Endothelial cell of umbilical vein (primary cell): ENCODE measurements at regions of chr7 and their contacts with region 1.

Region 1: DNA sequence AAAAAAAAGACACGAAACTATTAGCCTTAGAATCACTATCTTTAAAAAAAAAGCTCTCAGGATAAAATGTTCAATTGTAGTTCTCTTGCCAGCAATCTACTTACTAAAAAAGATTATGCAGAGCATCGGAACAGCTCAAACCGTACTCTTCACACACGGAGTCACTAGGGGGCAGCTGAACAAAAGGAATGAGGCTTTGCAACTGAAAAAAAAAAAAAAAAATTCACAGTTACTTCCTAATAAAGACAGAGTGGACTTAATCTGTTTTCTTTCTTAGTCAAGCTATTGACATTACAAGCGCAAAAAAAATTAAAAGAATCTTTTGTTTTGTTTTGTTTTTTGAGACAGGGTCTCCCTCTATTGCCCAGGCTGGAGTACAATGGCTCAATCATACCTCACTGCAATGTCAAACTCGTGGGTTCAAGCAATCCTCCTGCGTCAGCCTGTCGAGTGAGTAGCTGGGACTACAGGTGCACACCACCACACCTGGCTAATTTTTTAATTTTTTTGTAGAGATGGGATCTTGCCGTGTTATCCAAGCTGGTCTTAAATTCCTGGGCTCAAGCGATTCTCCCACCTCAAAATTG is 11.5 kb downstream of the PMS2 start:
- DNase-seq: peak; percentile 74
- H3K4me3 ChIP-seq: no peak overlapping the region
- H3K27ac ChIP-seq: no peak overlapping the region
- H3K4me1 ChIP-seq: no peaks in the 10 kb centered on the region
- H3K27me3 ChIP-seq: no peaks in the 10 kb centered on the region
- CTCF ChIP-seq: peak; percentile 30 to 53
- POLR2A ChIP-seq: no peak

Region 2: DNA sequence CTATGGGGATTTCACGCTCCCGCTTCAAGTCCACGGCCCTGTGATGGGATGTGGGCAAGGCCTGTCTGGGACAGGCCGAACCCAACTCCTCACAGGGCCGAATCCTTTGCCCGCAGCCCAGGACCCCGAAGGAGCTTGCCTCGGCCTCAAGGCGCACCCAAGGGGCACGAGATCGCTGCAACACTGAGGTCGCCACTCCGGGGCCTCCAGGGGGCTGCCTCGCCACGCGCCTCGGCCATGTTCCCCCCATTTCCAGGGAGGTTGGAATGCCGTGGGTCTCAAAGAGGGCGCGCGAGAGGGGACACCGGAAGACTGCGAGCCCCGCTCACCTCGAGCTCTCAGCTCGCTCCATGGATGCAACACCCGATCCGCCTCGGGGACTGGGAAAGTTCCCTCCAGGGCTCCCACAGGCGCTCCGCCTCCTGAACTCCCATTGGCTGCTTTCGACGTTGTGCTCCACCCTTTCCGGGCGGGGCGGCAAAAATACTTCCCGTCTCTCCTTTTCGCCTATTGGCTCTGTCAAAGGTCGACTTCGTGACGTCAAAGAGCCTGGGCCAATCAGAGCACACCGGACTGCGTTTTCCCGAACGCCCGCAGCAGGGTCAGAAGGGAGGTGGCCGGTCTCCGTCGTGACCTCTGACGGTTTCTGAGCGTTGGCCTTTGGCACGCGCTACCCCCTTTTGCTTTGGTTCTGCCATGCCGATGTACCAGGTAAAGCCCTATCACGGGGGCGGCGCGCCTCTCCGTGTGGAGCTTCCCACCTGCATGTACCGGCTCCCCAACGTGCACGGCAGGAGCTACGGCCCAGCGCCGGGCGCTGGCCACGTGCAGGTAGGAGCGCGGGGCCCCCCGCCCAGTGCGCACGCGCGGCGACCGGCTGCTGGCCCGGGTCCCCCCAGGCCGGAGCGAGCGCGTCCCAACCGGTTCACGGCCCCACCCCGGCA is 11.6 kb after region 1 on chr7 and contains the starts of genes AIMP2 and PMS2:
- CTCF ChIA-PET with region 1: interaction called, 29 read pairs
- POLR2A ChIA-PET with region 1: interaction called, 3 read pairs
- dilution Hi-C with region 1: no loop called
- intact Hi-C with region 1: no loop called
- DNase-seq: peak; percentile 99
- H3K4me3 ChIP-seq: peak within 1 kb of the TSS; percentile 27 to 83 (median 71)
- H3K27ac ChIP-seq: peak within 1 kb of the TSS; percentile 56
- H3K4me1 ChIP-seq: peaks cover 5% of the 10 kb centered on the region
- H3K27me3 ChIP-seq: no peaks in the 10 kb centered on the region
- CTCF ChIP-seq: peak in 1 of 2 donors; percentile 26
- POLR2A ChIP-seq: peak; percentile 93
- total RNA-seq, gene AIMP2: 44.6 and 45.6 TPM in 2 replicates
- total RNA-seq, gene PMS2: 14.5 and 15.9 TPM in 2 replicates

Region 3: DNA sequence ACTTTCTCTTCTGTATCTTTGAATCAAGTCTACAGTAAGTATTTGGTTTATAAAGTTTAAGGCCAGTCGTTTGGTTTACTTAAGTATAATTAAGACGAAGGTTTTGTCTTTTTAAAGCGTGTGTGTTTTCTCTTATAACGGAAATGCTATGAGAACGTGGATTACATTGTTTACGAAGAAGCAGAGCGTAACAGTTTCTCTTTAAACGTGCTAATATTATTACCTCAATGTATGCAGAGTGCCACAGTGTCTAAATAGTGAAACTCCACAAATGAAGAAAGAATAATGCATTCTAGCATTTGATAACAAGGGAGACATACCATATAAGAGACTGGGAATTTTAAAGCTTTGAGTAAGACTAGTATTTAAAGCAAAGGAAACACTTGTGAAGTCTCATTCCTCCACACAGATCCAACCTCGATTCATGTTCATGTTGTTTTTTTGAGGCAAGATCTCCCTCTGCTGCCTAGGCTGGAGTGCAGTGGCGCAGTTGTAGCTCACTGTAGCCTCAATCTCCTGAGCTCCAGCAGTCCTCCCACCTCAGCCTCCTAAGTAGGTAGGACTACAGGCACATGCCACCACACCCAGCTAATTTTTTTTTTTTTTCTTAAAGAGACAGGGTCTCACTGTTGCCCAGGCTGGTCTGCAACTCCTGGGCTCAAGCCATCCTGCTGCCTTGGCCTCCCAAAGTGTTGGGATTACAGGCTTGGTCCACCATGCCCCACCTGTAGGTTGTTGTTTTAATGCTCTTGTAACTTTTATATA is 109.0 kb after region 1 on chr7:
- CTCF ChIA-PET with region 1: interaction called, 21 read pairs
- POLR2A ChIA-PET with region 1: no interaction called
- dilution Hi-C with region 1: no loop called
- intact Hi-C with region 1: loop called (anchors 1 kb)
- DNase-seq: peak; percentile 58
- H3K4me3 ChIP-seq: peak overlapping the region; percentile 71 to 90 (median 88)
- H3K27ac ChIP-seq: peak overlapping the region; percentile 13
- H3K4me1 ChIP-seq: peaks cover 7% of the 10 kb centered on the region
- H3K27me3 ChIP-seq: no peaks in the 10 kb centered on the region
- CTCF ChIP-seq: peak in 1 of 2 donors; percentile 4
- POLR2A ChIP-seq: no peak

Region 4: DNA sequence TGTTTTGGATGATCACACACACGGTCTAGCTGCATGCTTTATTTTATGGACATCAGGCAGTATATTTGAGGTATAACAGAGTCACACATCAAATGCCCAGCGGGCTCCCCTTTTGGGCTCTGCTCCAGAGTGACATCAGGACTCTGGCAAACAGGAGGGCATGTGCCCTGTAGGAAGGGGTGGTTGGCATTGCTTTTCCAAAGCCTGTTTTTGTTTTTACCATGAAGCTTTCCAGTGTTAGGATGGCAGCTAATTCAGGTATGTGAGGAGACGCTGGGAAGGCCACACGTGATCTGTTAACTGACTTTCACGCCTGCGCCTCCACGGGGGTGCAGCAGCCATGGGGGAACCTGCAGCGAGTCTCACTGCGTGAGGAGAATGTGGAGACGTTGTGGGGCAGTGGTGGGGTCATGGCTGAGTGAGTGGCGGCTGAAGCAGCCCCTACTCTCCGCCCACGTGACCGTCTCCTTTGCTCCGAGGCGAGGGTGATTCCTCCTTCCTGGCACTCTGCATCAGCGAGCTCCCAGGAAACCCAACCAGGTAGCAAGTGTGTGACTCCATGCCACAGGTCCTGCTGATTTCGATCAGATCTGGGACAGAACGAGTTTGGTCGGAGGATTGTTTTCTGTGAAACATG is 151.5 kb after region 1 on chr7:
- CTCF ChIA-PET with region 1: interaction called, 5 read pairs
- POLR2A ChIA-PET with region 1: no interaction called
- dilution Hi-C with region 1: no loop called
- intact Hi-C with region 1: loop called (anchors 10 kb)
- DNase-seq: no peak
- H3K4me3 ChIP-seq: no peak overlapping the region
- H3K27ac ChIP-seq: no peak overlapping the region
- H3K4me1 ChIP-seq: no peaks in the 10 kb centered on the region
- H3K27me3 ChIP-seq: no peaks in the 10 kb centered on the region
- CTCF ChIP-seq: no peak
- POLR2A ChIP-seq: no peak

Region 5: DNA sequence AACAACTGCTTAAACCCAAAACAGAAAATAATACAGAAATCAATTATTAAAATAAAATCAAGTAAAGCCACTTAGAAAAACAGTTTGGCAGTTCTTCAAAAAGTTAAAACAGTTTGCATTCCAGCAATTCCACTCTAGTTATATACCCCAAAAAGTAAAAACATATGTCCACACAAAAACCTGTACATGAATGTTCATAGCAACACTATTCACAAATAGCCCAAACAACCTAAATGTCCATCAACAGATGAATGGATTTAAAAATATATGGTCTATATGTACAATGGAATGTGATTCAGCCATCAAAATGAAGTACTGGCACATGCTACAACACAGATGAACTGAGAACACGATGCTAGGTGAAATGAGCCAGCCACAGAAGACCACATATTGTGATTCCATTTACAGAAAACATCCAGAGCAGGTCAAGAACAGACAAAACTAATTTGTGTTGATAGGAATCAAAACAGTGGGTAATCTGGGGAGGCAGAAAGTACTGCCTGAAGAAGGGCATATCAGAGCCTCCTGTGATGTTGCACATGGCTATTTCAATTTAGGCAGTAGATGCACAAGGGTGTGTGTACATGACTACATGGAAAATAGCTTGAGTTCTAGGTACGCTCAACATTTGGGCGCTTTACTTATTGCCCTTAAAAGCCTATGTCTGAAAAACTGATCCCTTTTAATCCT is 208.8 kb after region 1 on chr7:
- CTCF ChIA-PET with region 1: no interaction called
- POLR2A ChIA-PET with region 1: no interaction called
- dilution Hi-C with region 1: no loop called
- intact Hi-C with region 1: no loop called
- DNase-seq: no peak
- H3K4me3 ChIP-seq: no peak overlapping the region
- H3K27ac ChIP-seq: no peak overlapping the region
- H3K4me1 ChIP-seq: no peaks in the 10 kb centered on the region
- H3K27me3 ChIP-seq: no peaks in the 10 kb centered on the region
- CTCF ChIP-seq: no peak
- POLR2A ChIP-seq: no peak

Region 6: GRCh38 chr7:6317797-6318438 is 320.6 kb after region 1 on chr7:
- CTCF ChIA-PET with region 1: interaction called, 26 read pairs
- POLR2A ChIA-PET with region 1: no interaction called
- dilution Hi-C with region 1: no loop called
- intact Hi-C with region 1: loop called (anchors 2 kb)
- DNase-seq: peak; percentile 47
- H3K4me3 ChIP-seq: no peak overlapping the region
- H3K27ac ChIP-seq: peak overlapping the region; percentile 15
- H3K4me1 ChIP-seq: peaks cover 9% of the 10 kb centered on the region
- H3K27me3 ChIP-seq: no peaks in the 10 kb centered on the region
- CTCF ChIP-seq: no peak
- POLR2A ChIP-seq: no peak